Naive thymus-derived CD4-positive, alpha-beta T cell (primary cell): ENCODE measurements at regions of chr20 and their contacts with region 1.

Region 1: GRCh38 chr20:58888521-58889333 is 36.2 kb downstream of the GNAS start:
- DNase-seq: peak; percentile 64 to 91 (median 86)
- ATAC-seq: peak; percentile 76
- H3K4me3 ChIP-seq: peak overlapping the region; percentile 68
- H3K4me3 Mint-ChIP-seq: peak overlapping the region; percentile 81 to 94 (median 87)
- H3K27ac ChIP-seq: peak overlapping the region; percentile 95
- H3K27ac Mint-ChIP-seq: peak overlapping the region; percentile 67 to 97 (median 90)
- H3K4me1 ChIP-seq: peaks cover 4 to 6% of the 10 kb centered on the region in 2 donors
- H3K4me1 Mint-ChIP-seq: peaks cover 15 to 46% (median 37%) of the 10 kb centered on the region in 7 donors
- H3K27me3 ChIP-seq: no peaks in the 10 kb centered on the region
- H3K27me3 Mint-ChIP-seq: peaks cover 0 to 3% (median 0%) of the 10 kb centered on the region in 5 donors

Region 2: GRCh38 chr20:57718490-57719271 is 1170.0 kb before region 1 on chr20:
- CTCF ChIA-PET with region 1: no interaction called
- POLR2A ChIA-PET with region 1: no interaction called
- intact Hi-C with region 1: loop called in 1 of 2 experiments (anchors 10 kb)
- DNase-seq: peak; percentile 59 to 90 (median 87)
- ATAC-seq: peak; percentile 98
- H3K4me3 ChIP-seq: peak overlapping the region; percentile 49
- H3K4me3 Mint-ChIP-seq: peak overlapping the region; percentile 53 to 79 (median 70)
- H3K27ac ChIP-seq: peak overlapping the region; percentile 52
- H3K27ac Mint-ChIP-seq: peak overlapping the region in 8 of 9 donors; percentile 41 to 81 (median 58)
- H3K4me1 ChIP-seq: peaks cover 5 to 7% of the 10 kb centered on the region in 2 donors
- H3K4me1 Mint-ChIP-seq: peaks cover 0 to 26% (median 12%) of the 10 kb centered on the region in 7 donors
- H3K27me3 ChIP-seq: no peaks in the 10 kb centered on the region
- H3K27me3 Mint-ChIP-seq: peaks cover 0 to 25% (median 0%) of the 10 kb centered on the region in 5 donors

Region 3: GRCh38 chr20:58877976-58878360 is 10.8 kb before region 1 on chr20:
- CTCF ChIA-PET with region 1: no interaction called
- POLR2A ChIA-PET with region 1: interaction called, 15 read pairs
- intact Hi-C with region 1: loop called in 1 of 2 experiments (anchors 1 kb)
- DNase-seq: peak in 7 of 9 donors; percentile 39 to 68 (median 52)
- ATAC-seq: peak; percentile 89
- H3K4me3 ChIP-seq: no peak overlapping the region
- H3K4me3 Mint-ChIP-seq: peak overlapping the region; percentile 14 to 68 (median 54)
- H3K27ac ChIP-seq: peak overlapping the region; percentile 39
- H3K27ac Mint-ChIP-seq: peak overlapping the region; percentile 79 to 96 (median 91)
- H3K4me1 ChIP-seq: peaks cover 0 to 16% of the 10 kb centered on the region in 2 donors
- H3K4me1 Mint-ChIP-seq: peaks cover 8 to 40% (median 30%) of the 10 kb centered on the region in 7 donors
- H3K27me3 ChIP-seq: no peaks in the 10 kb centered on the region
- H3K27me3 Mint-ChIP-seq: no peaks in the 10 kb centered on the region

Region 4: GRCh38 chr20:58980700-58981627 is 92.2 kb after region 1 on chr20 and contains the start of gene NELFCD:
- CTCF ChIA-PET with region 1: interaction called, 3 read pairs
- POLR2A ChIA-PET with region 1: interaction called, 12 read pairs
- intact Hi-C with region 1: loop called (anchors 1 kb)
- DNase-seq: peak; percentile 78 to 96 (median 88)
- ATAC-seq: peak; percentile 97
- H3K4me3 ChIP-seq: peak within 1 kb of the TSS; percentile 91
- H3K4me3 Mint-ChIP-seq: peak within 1 kb of the TSS; percentile 86 to 97 (median 94)
- H3K27ac ChIP-seq: peak within 1 kb of the TSS; percentile 88
- H3K27ac Mint-ChIP-seq: peak within 1 kb of the TSS; percentile 77 to 98 (median 90)
- H3K4me1 ChIP-seq: peaks cover 24% of the 10 kb centered on the region in 2 donors
- H3K4me1 Mint-ChIP-seq: peaks cover 26 to 41% (median 32%) of the 10 kb centered on the region in 7 donors
- H3K27me3 ChIP-seq: no peaks in the 10 kb centered on the region
- H3K27me3 Mint-ChIP-seq: peaks cover 0 to 9% (median 0%) of the 10 kb centered on the region in 5 donors
- total RNA-seq, gene NELFCD: 84.5 to 96.1 (median 90.8) TPM

Region 5: GRCh38 chr20:59159493-59160376 is 271.0 kb after region 1 on chr20:
- CTCF ChIA-PET with region 1: no interaction called
- POLR2A ChIA-PET with region 1: interaction called, 5 read pairs
- intact Hi-C with region 1: loop called (anchors 5 kb)
- DNase-seq: peak in 8 of 9 donors; percentile 50 to 86 (median 82)
- ATAC-seq: peak; percentile 93
- H3K4me3 ChIP-seq: peak overlapping the region; percentile 55
- H3K4me3 Mint-ChIP-seq: peak overlapping the region; percentile 76 to 93 (median 89)
- H3K27ac ChIP-seq: peak overlapping the region; percentile 93
- H3K27ac Mint-ChIP-seq: peak overlapping the region; percentile 95 to 99 (median 98)
- H3K4me1 ChIP-seq: peaks cover 55 to 79% of the 10 kb centered on the region in 2 donors
- H3K4me1 Mint-ChIP-seq: peaks cover 49 to 95% (median 89%) of the 10 kb centered on the region in 7 donors
- H3K27me3 ChIP-seq: no peaks in the 10 kb centered on the region
- H3K27me3 Mint-ChIP-seq: no peaks in the 10 kb centered on the region